H1 (cell line): ENCODE measurements at regions of chr11 and their contacts with region 1.

Region 1: GRCh38 chr11:45079943-45080719 is 66.3 kb upstream of the PRDM11 start:
- DNase-seq: no peak
- H3K4me3 ChIP-seq: no peak overlapping the region
- H3K27ac ChIP-seq: no peak overlapping the region
- H3K4me1 ChIP-seq: peaks cover 11 to 35% (median 12%) of the 10 kb centered on the region in 4 experiments
- H3K27me3 ChIP-seq: no peaks in the 10 kb centered on the region
- CTCF ChIP-seq: no peak
- EP300 ChIP-seq: no peak
- POLR2A ChIP-seq: no peak
- RAD21 ChIP-seq: no peak

Region 2: GRCh38 chr11:44977476-44977984 is 102.6 kb before region 1 on chr11:
- CTCF ChIA-PET with region 1: interaction called, 16 read pairs
- POLR2A ChIA-PET with region 1: no interaction called
- DNase-seq: no peak
- H3K4me3 ChIP-seq: no peak overlapping the region
- H3K27ac ChIP-seq: no peak overlapping the region
- H3K4me1 ChIP-seq: peaks cover 0 to 27% (median 18%) of the 10 kb centered on the region in 4 experiments; a peak in 6 of 7 replicates
- H3K27me3 ChIP-seq: no peaks in the 10 kb centered on the region
- CTCF ChIP-seq: peak; percentile 57 to 83 (median 79)
- EP300 ChIP-seq: no peak
- POLR2A ChIP-seq: no peak
- RAD21 ChIP-seq: peak; percentile 48 to 69

Region 3: GRCh38 chr11:44992181-44992582 is 87.9 kb before region 1 on chr11:
- CTCF ChIA-PET with region 1: no interaction called
- POLR2A ChIA-PET with region 1: no interaction called
- DNase-seq: no peak
- H3K4me3 ChIP-seq: no peak overlapping the region
- H3K27ac ChIP-seq: no peak overlapping the region
- H3K4me1 ChIP-seq: 0 out of 7 replicates have a peak, but pooled peaks cover 0 to under 1% (median 0%) of the 10 kb centered on the region in 4 experiments
- H3K27me3 ChIP-seq: no peaks in the 10 kb centered on the region
- CTCF ChIP-seq: no peak
- EP300 ChIP-seq: no peak
- POLR2A ChIP-seq: no peak
- RAD21 ChIP-seq: no peak

Region 4: DNA sequence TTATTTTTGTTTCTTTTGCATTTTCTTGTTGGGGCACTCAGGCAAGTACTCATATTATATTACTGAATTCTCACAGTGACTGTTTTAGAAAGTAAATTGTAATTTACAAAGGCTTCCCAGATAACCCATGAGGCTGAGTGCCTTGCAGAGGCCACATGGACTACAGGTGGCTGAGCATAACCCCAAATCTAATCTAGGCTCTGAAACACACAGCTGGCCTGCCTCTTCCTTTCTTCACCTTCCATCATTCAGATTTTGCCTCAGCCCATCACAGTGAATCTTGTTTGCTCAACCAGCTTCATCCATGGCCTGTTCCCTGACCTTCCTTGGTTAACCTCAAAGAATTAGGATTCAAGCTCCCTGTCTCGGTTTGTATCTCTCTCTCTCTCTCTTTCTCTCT is 12.2 kb before region 1 on chr11:
- CTCF ChIA-PET with region 1: interaction called, 19 read pairs
- POLR2A ChIA-PET with region 1: interaction called, 3 read pairs
- DNase-seq: no peak
- H3K4me3 ChIP-seq: no peak overlapping the region
- H3K27ac ChIP-seq: no peak overlapping the region
- H3K4me1 ChIP-seq: peaks cover 0 to 3% (median 0%) of the 10 kb centered on the region in 4 experiments; a peak in 1 of 7 replicates
- H3K27me3 ChIP-seq: peaks cover 0 to 2% (median 0%) of the 10 kb centered on the region in 4 experiments; a peak in 1 of 7 replicates
- CTCF ChIP-seq: no peak
- EP300 ChIP-seq: no peak
- POLR2A ChIP-seq: no peak
- RAD21 ChIP-seq: no peak

Region 5: DNA sequence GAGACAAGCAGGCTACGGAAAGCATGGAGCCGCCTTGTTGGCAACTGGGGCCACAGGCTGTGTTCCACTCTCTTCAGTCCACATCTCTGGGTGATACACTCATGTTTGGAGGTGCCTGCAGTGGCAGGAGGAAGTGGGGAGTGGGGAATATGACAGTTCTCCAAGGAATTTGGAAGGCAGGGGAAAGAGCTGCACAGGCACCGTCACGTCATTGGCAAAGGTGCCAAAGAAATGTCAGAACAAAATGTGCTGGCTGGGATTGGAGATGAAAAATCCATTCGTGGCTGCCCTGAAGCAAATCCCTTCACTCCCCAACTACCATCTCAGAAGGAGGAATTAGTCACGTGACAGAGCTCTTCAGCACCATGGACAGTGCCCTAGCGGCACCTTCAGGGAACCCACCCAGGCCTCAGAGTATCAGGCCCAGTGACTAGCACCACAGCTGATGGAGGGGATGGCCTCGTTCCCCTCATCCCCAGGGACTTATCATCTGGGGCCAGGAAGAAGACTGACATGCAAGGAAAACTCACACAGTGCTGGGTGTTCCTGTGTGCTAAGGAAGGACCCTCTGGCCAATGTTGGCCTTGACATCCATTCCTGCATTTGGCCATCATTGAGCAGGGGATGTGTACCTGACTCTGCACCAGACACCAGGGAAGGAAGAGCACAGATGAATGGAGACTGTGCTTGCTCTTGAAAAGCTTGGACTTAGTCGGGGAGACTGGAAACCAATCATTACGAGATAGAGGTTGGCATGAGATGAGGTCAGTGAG is 17.8 kb after region 1 on chr11:
- CTCF ChIA-PET with region 1: interaction called, 31 read pairs
- POLR2A ChIA-PET with region 1: interaction called, 4 read pairs
- DNase-seq: peak in 1 of 2 experiments; percentile 94
- H3K4me3 ChIP-seq: no peak overlapping the region
- H3K27ac ChIP-seq: no peak overlapping the region
- H3K4me1 ChIP-seq: peaks cover under 1 to 4% (median 3%) of the 10 kb centered on the region in 4 experiments; a peak in 4 of 7 replicates
- H3K27me3 ChIP-seq: no peaks in the 10 kb centered on the region
- CTCF ChIP-seq: peak in 2 of 3 experiments; percentile 4 to 10; a peak in 1 of 4 replicates
- EP300 ChIP-seq: no peak
- POLR2A ChIP-seq: no peak
- RAD21 ChIP-seq: peak; percentile 28 to 29; a peak in 2 of 4 replicates

Region 6: DNA sequence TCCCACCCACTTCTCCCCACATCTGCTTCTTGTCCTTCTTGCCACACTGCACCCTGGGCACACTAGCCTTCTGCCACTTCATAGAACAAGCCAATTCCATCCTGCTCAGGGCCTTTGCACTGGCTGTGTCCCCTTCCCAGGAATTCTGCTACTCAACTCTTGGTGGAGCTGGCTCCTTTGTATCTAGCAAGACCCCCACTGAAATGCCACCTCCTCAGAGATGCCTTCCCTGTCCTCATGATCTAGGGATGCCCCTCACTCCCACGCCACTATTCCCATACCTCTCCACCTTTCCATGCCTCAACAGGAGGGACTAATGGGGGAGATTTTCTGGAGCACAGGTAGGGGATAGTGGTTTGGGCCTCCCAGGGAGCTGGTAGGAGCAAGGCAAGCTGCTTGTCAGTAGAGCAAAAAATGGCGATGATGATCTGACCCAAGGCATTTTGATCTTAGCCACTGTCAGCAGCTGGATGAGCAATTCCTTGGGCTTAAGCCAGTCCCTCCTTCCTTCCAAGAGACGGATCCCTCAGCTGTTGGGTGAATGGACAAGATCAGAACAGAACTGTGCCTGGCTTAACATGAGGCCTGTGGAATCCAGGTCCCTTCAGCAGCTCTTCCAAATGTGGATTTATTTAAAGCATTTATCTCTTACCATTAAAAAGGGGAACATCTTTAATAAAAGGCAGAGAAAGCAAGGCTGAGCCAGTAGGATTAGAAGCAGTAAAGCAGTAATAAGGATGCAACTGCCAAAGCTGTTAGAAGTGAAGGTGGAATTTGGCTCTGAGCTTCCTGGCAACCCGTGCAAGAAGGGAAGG is 62.3 kb after region 1 on chr11:
- CTCF ChIA-PET with region 1: no interaction called
- POLR2A ChIA-PET with region 1: no interaction called
- DNase-seq: no peak
- H3K4me3 ChIP-seq: no peak overlapping the region
- H3K27ac ChIP-seq: no peak overlapping the region
- H3K4me1 ChIP-seq: peaks cover 0 to 5% (median 1%) of the 10 kb centered on the region in 4 experiments; a peak in 3 of 7 replicates
- H3K27me3 ChIP-seq: peaks cover 0 to 20% (median 10%) of the 10 kb centered on the region in 4 experiments; a peak in 5 of 7 replicates
- CTCF ChIP-seq: no peak
- EP300 ChIP-seq: no peak
- POLR2A ChIP-seq: no peak
- RAD21 ChIP-seq: no peak